MCF 10A (cell line): ENCODE measurements at regions of chr11 and their contacts with region 1.

Region 1: DNA sequence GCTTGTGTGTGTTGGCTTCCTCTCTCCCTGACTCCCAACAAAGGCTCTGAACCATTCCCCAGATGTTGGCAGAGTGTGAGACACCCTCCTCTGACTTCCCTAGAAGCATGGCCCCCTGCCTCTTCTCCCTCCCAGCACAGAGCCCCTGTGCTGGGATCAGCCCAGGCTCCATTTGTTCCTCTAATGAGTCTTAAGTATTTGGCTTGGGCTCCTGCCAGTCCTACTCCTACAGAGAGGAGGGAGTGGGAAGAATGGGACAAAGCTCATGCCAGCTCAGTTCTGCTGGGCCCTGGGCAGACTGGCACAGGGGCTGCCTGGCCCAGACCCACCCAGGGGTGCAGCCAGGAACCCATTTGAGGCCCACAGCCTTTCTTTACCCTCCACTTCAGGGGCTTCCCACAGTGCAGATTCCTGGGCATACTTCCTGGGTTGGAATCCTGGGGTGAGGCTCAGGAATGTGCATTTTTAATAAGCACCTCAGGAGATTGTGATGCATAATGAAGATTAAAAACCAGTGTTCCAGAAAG is 30.1 kb downstream of the TNKS1BP1 start:
- DNase-seq: peak; percentile 82
- H3K4me3 Mint-ChIP-seq: peak overlapping the region; percentile 31
- H3K27ac Mint-ChIP-seq: peak overlapping the region; percentile 90
- H3K4me1 Mint-ChIP-seq: peaks cover 38% of the 10 kb centered on the region
- H3K27me3 Mint-ChIP-seq: no peaks in the 10 kb centered on the region
- CTCF ChIP-seq: no peak

Region 2: DNA sequence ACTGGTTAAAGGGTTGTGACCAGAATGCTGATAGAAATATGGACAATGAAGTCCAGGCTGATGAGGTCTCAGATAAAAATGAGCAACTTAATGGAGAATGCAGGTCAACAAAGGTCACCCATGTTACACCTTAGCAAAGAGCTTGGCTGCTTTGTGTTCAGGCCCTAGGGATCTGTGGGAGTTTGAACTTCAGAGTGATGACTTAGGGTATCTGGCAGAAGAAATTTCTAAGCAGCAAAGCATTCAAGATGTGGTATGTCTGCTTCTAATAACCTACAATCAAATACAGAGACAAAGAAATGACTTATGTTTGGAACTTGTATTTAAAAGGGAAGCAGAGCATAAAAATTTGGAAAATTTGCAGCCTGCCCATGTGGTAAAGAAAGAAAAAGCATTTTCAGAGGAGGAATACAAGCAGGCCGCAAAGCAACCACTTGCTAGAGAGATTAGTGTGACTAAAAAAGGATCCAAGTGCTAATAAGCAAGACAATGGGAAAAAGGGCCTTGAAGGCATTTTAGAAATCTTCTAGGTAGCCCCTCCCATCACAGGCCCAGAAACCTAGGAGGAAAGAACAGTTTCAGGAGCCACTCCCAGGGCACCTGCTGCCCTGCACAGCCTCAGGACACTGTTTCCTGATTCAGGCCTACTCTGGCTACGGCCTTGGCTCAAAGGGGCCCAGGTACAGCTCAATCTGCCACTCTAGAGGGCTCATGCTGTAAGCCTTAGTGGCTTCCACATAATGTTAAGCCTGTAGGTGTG is 11.3 kb before region 1 on chr11:
- CTCF ChIA-PET with region 1: interaction called, 31 read pairs
- POLR2A ChIA-PET with region 1: interaction called, 93 read pairs
- intact Hi-C with region 1: loop called (anchors 2 kb)
- DNase-seq: no peak
- H3K4me3 Mint-ChIP-seq: no peak overlapping the region
- H3K27ac Mint-ChIP-seq: no peak overlapping the region
- H3K4me1 Mint-ChIP-seq: peaks cover 24% of the 10 kb centered on the region
- H3K27me3 Mint-ChIP-seq: no peaks in the 10 kb centered on the region
- CTCF ChIP-seq: no peak